K562 (cell line): ENCODE measurements at regions of chr3 and their contacts with region 1.

Region 1: GRCh38 chr3:120404876-120405275 is 45.9 kb downstream of the FSTL1 start:
- DNase-seq: no peak
- ATAC-seq: no peak
- H3K4me3 ChIP-seq: no peak overlapping the region
- H3K27ac ChIP-seq: no peak overlapping the region
- H3K4me1 ChIP-seq: no peaks in the 10 kb centered on the region
- H3K27me3 ChIP-seq: no peaks in the 10 kb centered on the region
- CTCF ChIP-seq: no peak
- EP300 ChIP-seq: no peak
- POLR2A ChIP-seq: no peak
- RAD21 ChIP-seq: no peak

Region 2: DNA sequence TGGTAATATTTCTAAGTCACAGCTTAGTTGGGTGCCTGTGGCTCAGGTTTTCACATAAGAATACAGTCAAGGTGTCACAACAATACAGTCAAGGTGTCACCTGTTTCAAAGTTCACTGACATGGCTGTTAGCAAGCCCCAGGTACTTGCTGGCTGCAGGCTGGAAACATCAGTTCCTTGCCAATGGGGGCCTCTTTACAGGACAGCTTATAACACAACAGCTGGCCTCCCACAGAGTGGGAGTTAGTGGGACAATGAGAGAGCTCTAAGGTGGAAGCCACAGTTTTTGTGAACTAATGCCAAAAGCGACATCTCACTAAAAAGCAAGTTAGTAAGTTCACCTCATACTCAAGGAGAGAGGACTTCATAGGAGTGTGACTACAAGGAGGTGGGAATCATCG is 165.2 kb before region 1 on chr3:
- CTCF ChIA-PET with region 1: no interaction called
- POLR2A ChIA-PET with region 1: no interaction called
- in situ Hi-C with region 1: loop called (anchors 5 kb)
- intact Hi-C with region 1: no loop called
- DNase-seq: no peak
- ATAC-seq: no peak
- H3K4me3 ChIP-seq: no peak overlapping the region
- H3K27ac ChIP-seq: no peak overlapping the region
- H3K4me1 ChIP-seq: no peaks in the 10 kb centered on the region
- H3K27me3 ChIP-seq: peaks cover 0 to 4% of the 10 kb centered on the region in 2 experiments; a peak in 1 of 5 replicates
- CTCF ChIP-seq: no peak
- EP300 ChIP-seq: no peak
- POLR2A ChIP-seq: no peak
- RAD21 ChIP-seq: no peak

Region 3: DNA sequence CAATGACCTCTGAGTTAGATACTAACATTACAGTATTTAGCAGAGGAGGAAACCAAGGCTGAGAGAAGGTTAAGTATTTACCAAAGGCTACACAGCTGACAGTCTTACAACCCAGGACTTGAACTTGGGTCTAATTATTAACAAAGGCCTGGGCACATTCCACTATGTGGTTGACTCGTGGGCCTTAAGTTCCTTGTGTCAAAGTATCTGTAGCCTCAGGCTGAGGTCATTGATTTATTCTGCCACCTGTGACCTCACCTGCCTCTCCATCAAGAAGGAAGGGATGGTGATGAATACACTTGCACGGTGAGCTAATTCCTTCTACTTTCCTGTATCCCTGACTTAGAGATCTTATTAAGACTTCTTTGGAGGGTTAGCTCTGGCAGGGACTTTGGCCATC is 35.9 kb before region 1 on chr3:
- CTCF ChIA-PET with region 1: no interaction called
- POLR2A ChIA-PET with region 1: no interaction called
- in situ Hi-C with region 1: no loop called
- intact Hi-C with region 1: no loop called
- DNase-seq: no peak
- ATAC-seq: no peak
- H3K4me3 ChIP-seq: no peak overlapping the region
- H3K27ac ChIP-seq: no peak overlapping the region
- H3K4me1 ChIP-seq: no peaks in the 10 kb centered on the region
- H3K27me3 ChIP-seq: no peaks in the 10 kb centered on the region
- CTCF ChIP-seq: no peak
- EP300 ChIP-seq: no peak
- POLR2A ChIP-seq: no peak
- RAD21 ChIP-seq: no peak